RWPE1 (cell line): ENCODE measurements at regions of chr1 and their contacts with region 1.

Region 1: GRCh38 chr1:214234635-214235025 is 46.3 kb upstream of the SMYD2 start:
- DNase-seq: no peak
- H3K27ac ChIP-seq: no peak overlapping the region
- CTCF ChIP-seq: no peak

Region 2: DNA sequence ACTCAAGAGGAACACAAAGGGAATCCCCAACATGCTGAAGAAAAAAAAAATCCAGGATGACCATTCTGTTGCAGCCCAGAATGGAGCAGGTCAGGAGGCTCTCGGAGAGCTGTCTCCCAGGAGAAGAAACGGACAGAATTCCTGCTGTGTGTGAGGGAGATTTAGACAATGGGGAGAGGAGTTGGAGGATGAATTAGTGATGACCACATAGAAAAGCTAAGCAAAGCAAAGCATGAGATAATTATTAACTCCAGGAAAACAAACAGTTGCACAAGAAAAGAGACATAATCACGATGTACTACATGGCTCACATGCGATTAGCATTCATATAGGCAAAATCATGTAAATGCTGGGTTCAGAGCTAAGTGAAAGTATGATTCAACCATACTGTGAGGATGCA is 14.7 kb before region 1 on chr1:
- CTCF ChIA-PET with region 1: no interaction called
- POLR2A ChIA-PET with region 1: no interaction called
- DNase-seq: no peak
- H3K27ac ChIP-seq: no peak overlapping the region
- CTCF ChIP-seq: no peak

Region 3: DNA sequence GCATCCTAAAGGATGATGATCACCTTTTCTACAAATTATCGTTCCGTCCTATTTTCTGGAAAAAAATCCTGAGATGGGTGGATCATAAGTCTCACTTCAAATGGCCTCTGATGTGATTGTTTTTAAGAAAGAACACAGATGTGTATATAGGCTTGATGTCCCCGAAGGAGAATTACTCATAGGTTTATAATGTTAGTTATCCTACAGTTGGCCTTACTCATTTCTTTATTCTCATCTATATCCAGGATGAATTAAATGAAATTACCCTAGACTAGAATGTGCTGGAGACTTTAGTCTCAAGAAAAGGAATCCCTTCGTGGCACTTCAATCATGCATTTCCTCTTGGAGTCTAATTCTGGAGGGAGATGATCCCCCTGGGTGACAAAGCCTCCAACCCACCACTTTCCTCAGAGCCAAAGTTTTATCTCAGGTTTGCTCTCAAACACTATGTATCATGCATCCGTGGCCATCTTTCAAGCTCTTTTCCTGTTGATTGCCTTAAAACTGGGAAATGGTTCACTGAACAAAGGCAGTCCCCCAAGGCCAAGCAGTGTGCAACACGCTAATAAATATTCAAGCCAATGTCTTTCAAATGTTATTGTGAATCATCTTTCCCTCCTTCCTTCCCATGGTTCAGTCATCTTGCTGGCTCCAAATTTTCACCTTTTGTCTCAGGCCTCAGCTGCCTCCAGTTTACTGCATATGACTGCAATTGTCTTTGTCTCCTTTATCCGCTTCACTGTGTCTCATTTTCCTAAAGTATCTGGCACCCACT is 13.9 kb after region 1 on chr1:
- CTCF ChIA-PET with region 1: no interaction called
- POLR2A ChIA-PET with region 1: no interaction called
- DNase-seq: no peak
- H3K27ac ChIP-seq: no peak overlapping the region
- CTCF ChIP-seq: no peak

Region 4: DNA sequence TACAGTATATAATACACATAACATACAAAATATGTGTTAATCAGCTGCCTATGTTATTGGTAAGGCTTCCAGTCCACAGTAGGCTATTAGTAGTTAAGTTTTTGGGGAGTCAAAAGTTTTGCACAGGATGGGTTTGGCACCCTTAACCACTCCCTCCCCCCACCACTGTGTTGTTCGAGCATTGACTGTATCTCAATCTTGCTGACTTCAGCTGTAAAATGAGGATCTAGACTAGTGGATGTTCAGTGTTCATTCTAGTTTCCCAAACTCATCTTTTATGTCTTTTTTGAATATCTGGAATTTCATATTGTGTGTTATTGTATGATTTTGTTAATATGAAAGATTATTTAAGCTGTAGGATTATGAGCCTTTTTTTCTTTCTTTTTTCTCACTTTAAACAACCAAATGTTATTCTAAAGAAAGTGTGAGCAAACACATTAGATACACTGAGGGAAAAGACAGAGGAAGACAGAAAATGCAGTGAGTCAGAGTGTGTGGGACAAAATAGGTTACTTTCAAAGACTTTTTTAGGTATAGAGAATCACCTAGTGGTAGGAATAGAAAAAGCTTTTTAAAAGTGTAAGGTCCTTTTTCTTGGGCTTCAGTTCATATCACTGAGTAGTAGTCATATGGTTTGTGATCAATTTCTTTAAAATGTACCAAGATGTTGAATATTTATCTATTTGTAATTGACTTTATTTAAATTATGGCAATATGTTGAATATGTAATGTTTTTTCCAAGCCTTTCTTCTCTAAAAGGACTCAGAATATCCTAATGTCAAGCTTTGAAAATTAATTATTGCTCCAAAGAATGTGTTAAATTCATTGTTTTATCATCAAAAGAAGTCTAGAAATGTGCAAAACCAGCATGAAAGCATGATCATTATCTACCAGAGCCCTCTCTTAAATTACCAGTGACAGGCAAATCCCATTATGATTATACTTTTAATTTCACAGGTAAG is 350.5 kb after region 1 on chr1:
- CTCF ChIA-PET with region 1: interaction called, 11 read pairs
- POLR2A ChIA-PET with region 1: no interaction called
- DNase-seq: peak; percentile 54
- H3K27ac ChIP-seq: peak overlapping the region; percentile 71
- CTCF ChIP-seq: peak; percentile 96